Kidney (tissue), 22 donors: ENCODE measurements at regions of chr11 and their contacts with region 1.

Region 1: GRCh38 chr11:124415356-124415923 is 9.2 kb downstream of the OR8B4 start:
- DNase-seq: peak in 2 of 5 donors; percentile 22 to 40
- H3K4me3 ChIP-seq: no peak overlapping the region
- H3K27ac ChIP-seq: no peak overlapping the region
- H3K4me1 ChIP-seq: no peaks in the 10 kb centered on the region
- H3K27me3 ChIP-seq: no peaks in the 10 kb centered on the region
- CTCF ChIP-seq: peak; percentile 59

Region 2: DNA sequence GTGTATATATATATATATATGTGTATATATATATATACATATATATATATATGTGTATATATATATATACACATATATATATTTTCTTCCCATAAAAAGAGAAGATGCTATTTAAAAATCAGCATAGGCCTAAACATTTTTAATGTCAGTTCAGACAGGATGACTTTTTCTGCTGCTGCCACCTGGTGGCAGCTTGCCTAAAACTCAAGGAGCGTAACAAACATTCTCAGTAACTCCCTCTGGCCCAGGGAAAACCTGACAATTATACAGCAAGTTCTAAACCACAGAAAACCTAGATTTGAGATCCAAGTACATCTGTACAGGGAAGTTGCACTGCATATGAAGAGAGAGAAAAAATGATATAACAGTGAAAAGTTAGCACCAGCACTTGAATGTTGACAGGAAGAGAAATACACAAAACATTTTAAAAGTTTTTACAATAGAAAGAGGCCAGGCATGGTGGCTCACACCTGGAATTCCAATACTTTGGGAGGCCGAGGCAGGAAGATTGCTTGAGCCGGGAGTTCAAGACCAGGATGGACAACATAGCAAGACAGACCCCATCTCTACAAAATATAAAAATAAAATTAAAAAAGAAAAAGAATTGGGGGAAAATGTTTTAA is 170.9 kb after region 1 on chr11:
- intact Hi-C with region 1: loop called (anchors 10 kb)
- DNase-seq: peak in 4 of 5 donors; percentile 34 to 84 (median 54)
- H3K4me3 ChIP-seq: no peak overlapping the region
- H3K27ac ChIP-seq: no peak overlapping the region
- H3K4me1 ChIP-seq: no peaks in the 10 kb centered on the region
- H3K27me3 ChIP-seq: no peaks in the 10 kb centered on the region
- CTCF ChIP-seq: peak; percentile 79

Region 3: GRCh38 chr11:124987096-124987495 is 571.7 kb after region 1 on chr11:
- intact Hi-C with region 1: no loop called
- DNase-seq: no peak
- H3K4me3 ChIP-seq: no peak overlapping the region
- H3K27ac ChIP-seq: no peak overlapping the region
- H3K4me1 ChIP-seq: no peaks in the 10 kb centered on the region
- H3K27me3 ChIP-seq: no peaks in the 10 kb centered on the region
- CTCF ChIP-seq: no peak